Activated T-helper 1 cell treated with anti-CD3 and anti-CD28 coated beads, Interleukin-12 subunit alpha, Interleukin-12 subunit beta, Interleukin-2, Interleukin-4 antibody, amounts not matched to agents 30 ng/mL and 10 ng/mL and 1 ng/mL, durations not matched to agents 14 hours and 24 hours and 36 hours (primary cell): ENCODE measurements at regions of chr15 and their contacts with region 1.

Region 1: GRCh38 chr15:40807028-40807887 is at the starts of genes DNAJC17 and ZFYVE19:
- DNase-seq: peak; percentile 93
- H3K4me3 Mint-ChIP-seq: peak within 1 kb of the TSS; percentile 93
- H3K27ac Mint-ChIP-seq: peak within 1 kb of the TSS; percentile 100
- H3K4me1 Mint-ChIP-seq: peaks cover 17% of the 10 kb centered on the region
- H3K27me3 Mint-ChIP-seq: no peaks in the 10 kb centered on the region
- total RNA-seq, gene DNAJC17: 52.5 and 54.1 TPM in 2 replicates
- total RNA-seq, gene ZFYVE19: 36.2 and 38.6 TPM in 2 replicates

Region 2: GRCh38 chr15:40550341-40551037 is 256.8 kb before region 1 on chr15:
- intact Hi-C with region 1: no loop called
- DNase-seq: no peak
- H3K4me3 Mint-ChIP-seq: no peak overlapping the region
- H3K27ac Mint-ChIP-seq: no peak overlapping the region
- H3K4me1 Mint-ChIP-seq: no peaks in the 10 kb centered on the region
- H3K27me3 Mint-ChIP-seq: no peaks in the 10 kb centered on the region

Region 3: GRCh38 chr15:40564591-40565332 is 242.5 kb before region 1 on chr15 and contains the start of gene CCDC32:
- intact Hi-C with region 1: loop called (anchors 1 kb)
- DNase-seq: peak; percentile 96
- H3K4me3 Mint-ChIP-seq: peak within 1 kb of the TSS; percentile 96
- H3K27ac Mint-ChIP-seq: peak within 1 kb of the TSS; percentile 96
- H3K4me1 Mint-ChIP-seq: peaks cover 43% of the 10 kb centered on the region
- H3K27me3 Mint-ChIP-seq: no peaks in the 10 kb centered on the region
- total RNA-seq, gene CCDC32: 28.4 and 36.9 TPM in 2 replicates

Region 4: DNA sequence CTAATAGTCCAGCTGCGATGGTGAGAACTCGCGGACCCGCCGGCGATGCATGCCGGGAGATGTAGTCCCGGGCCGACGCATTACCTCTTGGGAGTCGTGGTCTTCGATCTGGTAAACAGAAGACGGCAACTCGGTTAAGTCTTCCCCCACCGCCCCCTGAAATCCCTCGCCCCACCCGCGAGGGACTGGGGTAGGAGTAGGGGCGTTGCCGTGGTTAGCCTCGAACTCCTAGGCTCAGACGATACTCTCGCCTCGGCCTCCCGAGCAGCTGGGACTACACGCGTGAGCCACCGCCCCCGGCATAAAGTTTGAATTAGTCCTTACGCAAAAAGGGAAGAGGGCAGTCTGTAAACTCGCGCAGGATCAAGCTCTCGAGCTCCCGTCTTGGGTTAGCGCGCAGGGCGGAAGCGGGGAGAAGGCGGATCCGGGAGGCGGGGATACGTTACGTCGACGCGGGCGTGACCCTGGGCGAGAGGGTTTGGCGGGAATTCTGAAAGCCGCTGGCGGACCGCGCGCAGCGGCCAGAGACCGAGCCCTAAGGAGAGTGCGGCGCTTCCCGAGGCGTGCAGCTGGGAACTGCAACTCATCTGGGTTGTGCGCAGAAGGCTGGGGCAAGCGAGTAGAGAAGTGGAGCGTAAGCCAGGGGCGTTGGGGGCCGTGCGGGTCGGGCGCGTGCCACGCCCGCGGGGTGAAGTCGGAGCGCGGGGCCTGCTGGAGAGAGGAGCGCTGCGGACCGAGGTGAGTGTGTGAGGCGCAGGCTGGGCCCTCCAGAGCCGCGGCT is 112.4 kb before region 1 on chr15 and contains the start of gene RAD51:
- intact Hi-C with region 1: loop called (anchors 1 kb)
- DNase-seq: peak; percentile 91
- H3K4me3 Mint-ChIP-seq: peak within 1 kb of the TSS; percentile 96
- H3K27ac Mint-ChIP-seq: peak within 1 kb of the TSS; percentile 91
- H3K4me1 Mint-ChIP-seq: peaks cover 41% of the 10 kb centered on the region
- H3K27me3 Mint-ChIP-seq: no peaks in the 10 kb centered on the region
- total RNA-seq, gene RAD51: 62.0 and 62.4 TPM in 2 replicates

Region 5: GRCh38 chr15:40763801-40764732 is 43.2 kb before region 1 on chr15 and contains the start of gene GCHFR:
- intact Hi-C with region 1: loop called (anchors 1 kb)
- DNase-seq: peak; percentile 73
- H3K4me3 Mint-ChIP-seq: peak within 1 kb of the TSS; percentile 81
- H3K27ac Mint-ChIP-seq: peak within 1 kb of the TSS; percentile 87
- H3K4me1 Mint-ChIP-seq: peaks cover 21% of the 10 kb centered on the region
- H3K27me3 Mint-ChIP-seq: peaks cover 2% of the 10 kb centered on the region
- total RNA-seq, gene GCHFR: 31.3 and 35.7 TPM in 2 replicates

Region 6: GRCh38 chr15:40825661-40826088 is 18.4 kb after region 1 on chr15:
- intact Hi-C with region 1: no loop called
- DNase-seq: no peak
- H3K4me3 Mint-ChIP-seq: no peak overlapping the region
- H3K27ac Mint-ChIP-seq: no peak overlapping the region
- H3K4me1 Mint-ChIP-seq: peaks cover 4% of the 10 kb centered on the region
- H3K27me3 Mint-ChIP-seq: peaks cover 5% of the 10 kb centered on the region

Region 7: DNA sequence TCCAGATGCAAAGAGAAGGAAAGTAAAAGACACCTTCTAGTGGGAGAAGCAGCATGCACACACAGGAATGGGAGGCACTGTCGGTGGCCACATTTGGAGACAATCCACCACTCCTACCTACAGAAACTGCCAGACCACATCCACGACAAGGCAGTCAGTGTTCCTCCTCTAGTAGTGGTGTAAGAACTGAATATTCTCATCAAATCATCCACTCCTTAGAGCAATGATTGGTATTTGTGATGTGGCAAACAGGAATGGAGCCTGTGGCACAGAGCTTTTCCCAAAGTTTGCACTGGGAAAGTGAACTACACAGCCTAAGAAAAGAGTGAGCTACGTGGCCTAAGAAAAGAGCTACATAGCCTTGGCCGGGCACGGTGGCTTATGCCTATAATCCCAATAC is 31.5 kb after region 1 on chr15:
- intact Hi-C with region 1: no loop called
- DNase-seq: no peak
- H3K4me3 Mint-ChIP-seq: no peak overlapping the region
- H3K27ac Mint-ChIP-seq: no peak overlapping the region
- H3K4me1 Mint-ChIP-seq: no peaks in the 10 kb centered on the region
- H3K27me3 Mint-ChIP-seq: peaks cover 12% of the 10 kb centered on the region

Region 8: GRCh38 chr15:40893733-40894688 is 86.8 kb after region 1 on chr15 and contains the start of gene VPS18:
- intact Hi-C with region 1: loop called (anchors 1 kb)
- DNase-seq: peak; percentile 98
- H3K4me3 Mint-ChIP-seq: peak within 1 kb of the TSS; percentile 97
- H3K27ac Mint-ChIP-seq: peak within 1 kb of the TSS; percentile 92
- H3K4me1 Mint-ChIP-seq: peaks cover 38% of the 10 kb centered on the region
- H3K27me3 Mint-ChIP-seq: peaks cover 4% of the 10 kb centered on the region
- total RNA-seq, gene VPS18: 15.0 and 16.7 TPM in 2 replicates

Region 9: GRCh38 chr15:41230650-41231533 is 423.6 kb after region 1 on chr15 and contains the starts of genes CHP1 and EXD1:
- intact Hi-C with region 1: loop called (anchors 1 kb)
- DNase-seq: peak; percentile 96
- H3K4me3 Mint-ChIP-seq: peak within 1 kb of the TSS; percentile 92
- H3K27ac Mint-ChIP-seq: peak within 1 kb of the TSS; percentile 89
- H3K4me1 Mint-ChIP-seq: peaks cover 23% of the 10 kb centered on the region
- H3K27me3 Mint-ChIP-seq: no peaks in the 10 kb centered on the region
- total RNA-seq, gene CHP1: 43.5 and 55.2 TPM in 2 replicates
- total RNA-seq, gene EXD1: not detected in 2 replicates